Astrocyte of the cerebellum (primary cell): ENCODE measurements at regions of chr10 and their contacts with region 1.

Region 1: GRCh38 chr10:47269294-47269693 is 30.7 kb upstream of the GDF10 start:
- DNase-seq: no peak
- H3K4me3 ChIP-seq: no peak overlapping the region
- CTCF ChIP-seq: peak; percentile 16

Region 2: GRCh38 chr10:47214520-47214919 is 54.8 kb before region 1 on chr10:
- in situ Hi-C with region 1: loop called (anchors 5 kb)
- DNase-seq: no peak
- H3K4me3 ChIP-seq: no peak overlapping the region
- CTCF ChIP-seq: no peak

Region 3: GRCh38 chr10:47336387-47337134 is 67.3 kb after region 1 on chr10:
- in situ Hi-C with region 1: no loop called
- DNase-seq: no peak
- H3K4me3 ChIP-seq: no peak overlapping the region
- CTCF ChIP-seq: no peak